Pancreas (tissue), 10 donors: ENCODE measurements at regions of chr19 and their contacts with region 1.

Region 1: DNA sequence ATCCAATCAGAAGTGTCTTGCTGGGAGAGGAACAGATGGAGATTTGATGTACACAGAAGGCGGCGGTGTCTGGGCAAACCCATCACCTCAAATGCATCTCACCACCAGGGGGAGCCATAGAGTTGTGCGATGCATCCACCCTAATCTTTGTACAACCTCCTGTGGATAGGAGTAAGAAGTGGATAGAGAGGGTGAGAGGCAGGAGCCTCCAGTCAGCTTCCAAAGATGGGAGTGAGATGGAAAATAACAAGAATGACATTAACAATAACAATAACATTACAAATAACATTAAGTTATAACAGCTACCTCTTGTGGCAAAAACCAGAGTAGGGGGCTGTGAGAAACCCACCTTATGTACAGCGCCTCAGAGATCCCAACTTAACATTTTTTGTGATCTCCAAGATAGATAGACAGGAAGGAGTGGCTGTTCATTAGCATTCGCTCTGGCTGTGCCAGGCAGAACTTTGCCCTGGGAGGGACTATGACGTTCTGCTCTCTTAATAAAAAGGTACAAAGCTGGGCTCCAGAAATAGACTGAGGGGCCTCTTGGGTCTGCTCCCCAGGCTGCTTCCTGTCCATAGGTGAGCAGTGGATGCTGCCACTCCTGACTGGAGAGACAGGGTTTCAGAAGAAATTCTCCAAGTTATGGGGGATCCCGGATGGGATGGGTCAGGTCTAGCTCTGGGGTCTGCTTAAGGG is 5.2 kb upstream of the CEACAM18 start:
- DNase-seq: peak in 5 of 6 donors; percentile 41 to 83 (median 72)
- ATAC-seq: peak; percentile 55 to 85 (median 82)
- H3K4me3 ChIP-seq: no peak overlapping the region
- H3K27ac ChIP-seq: no peak overlapping the region
- H3K4me1 ChIP-seq: no peaks in the 10 kb centered on the region
- H3K27me3 ChIP-seq: peaks cover 0 to 6% (median 0%) of the 10 kb centered on the region in 4 donors
- CTCF ChIP-seq: peak; percentile 76 to 91 (median 86)

Region 2: DNA sequence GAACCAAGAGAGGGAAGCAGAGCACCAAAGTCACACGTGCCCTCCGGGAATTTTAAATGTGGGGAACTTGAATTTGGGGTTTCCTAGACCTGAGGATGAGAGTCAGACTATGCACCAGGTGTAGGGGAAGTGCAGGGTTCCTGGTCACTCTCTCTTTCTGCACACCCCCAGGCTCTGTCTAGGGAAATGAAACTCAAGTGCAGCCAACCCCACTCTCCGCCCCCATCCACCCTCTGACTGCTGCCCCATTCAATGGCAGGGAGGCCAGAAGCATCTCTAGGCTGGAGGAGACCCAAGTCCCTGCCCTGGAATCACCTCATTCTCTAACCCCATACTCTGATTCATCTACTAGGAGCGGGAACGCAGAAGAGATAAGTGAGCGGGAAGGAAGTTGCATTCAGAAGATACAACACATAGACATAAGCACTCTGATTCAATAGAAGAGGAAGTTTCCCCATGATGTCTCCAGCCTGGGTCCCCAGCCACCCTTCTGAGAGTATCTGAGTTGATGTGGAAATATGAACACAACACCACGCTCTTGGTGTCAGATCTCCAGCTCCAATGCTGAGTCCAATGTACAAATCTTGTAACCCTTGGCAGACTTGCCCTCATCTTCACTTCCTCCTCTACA is 178.2 kb after region 1 on chr19:
- intact Hi-C with region 1: loop called in 2 of 3 experiments (anchors 10 kb)
- DNase-seq: no peak
- ATAC-seq: peak in 2 of 4 donors; percentile 50 to 77
- H3K4me3 ChIP-seq: no peak overlapping the region
- H3K27ac ChIP-seq: no peak overlapping the region
- H3K4me1 ChIP-seq: no peaks in the 10 kb centered on the region
- H3K27me3 ChIP-seq: no peaks in the 10 kb centered on the region
- CTCF ChIP-seq: no peak